ENCODE measurements at regions of chr7 and their contacts with region 1.

Region 1: DNA sequence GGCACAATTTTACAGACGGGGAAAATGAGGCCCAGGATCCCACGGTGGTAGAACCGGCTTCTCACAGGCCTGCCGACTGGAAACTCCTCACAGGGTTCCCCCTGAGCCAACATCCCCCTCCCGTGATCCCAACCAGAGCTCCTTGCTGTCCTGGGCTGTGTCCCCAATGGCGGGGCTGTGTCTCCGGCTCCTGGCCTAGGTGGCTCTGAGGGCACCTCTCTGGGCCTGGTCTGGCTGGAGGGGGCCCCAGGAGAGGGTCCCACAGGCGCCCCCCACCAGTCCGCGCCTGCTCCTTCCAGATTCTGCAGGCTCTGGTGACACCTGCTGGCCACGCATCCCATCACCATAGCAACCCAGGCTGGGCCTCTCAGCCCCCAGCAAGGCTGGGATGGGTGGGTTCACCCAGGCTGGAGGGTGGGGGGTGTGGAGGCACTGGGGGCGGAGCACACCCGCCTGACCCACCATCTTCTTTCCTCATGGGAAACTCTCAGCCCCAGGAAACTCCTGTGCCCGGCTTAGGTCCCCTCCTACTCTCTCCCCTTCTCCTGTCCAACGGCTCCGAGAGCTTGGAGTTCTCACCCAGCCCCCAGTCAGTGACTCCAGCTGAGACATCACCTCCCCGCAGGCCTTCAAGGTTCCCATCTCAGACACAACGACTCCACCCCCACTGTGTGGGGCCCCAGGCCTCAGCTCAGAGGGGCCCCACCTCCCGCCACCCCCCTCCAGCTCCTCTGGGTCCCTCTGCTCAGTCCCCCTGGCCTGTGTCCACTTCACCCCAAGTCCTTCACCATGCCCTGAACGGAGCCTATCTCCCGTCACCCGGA is 27.1 kb upstream of the TNRC18 start:
- DNase-seq: peak; percentile 56 to 65
- H3K4me3 ChIP-seq: no peak overlapping the region
- H3K27ac ChIP-seq: no peak overlapping the region
- H3K4me1 ChIP-seq: no peaks in the 10 kb centered on the region
- H3K27me3 ChIP-seq: no peaks in the 10 kb centered on the region
- CTCF ChIP-seq: peak; percentile 72 to 84 (median 80)
- POLR2A ChIP-seq: no peak

Region 2: GRCh38 chr7:5077740-5078139 is 373.0 kb before region 1 on chr7:
- intact Hi-C with region 1: no loop called
- DNase-seq: no peak
- H3K4me3 ChIP-seq: no peak overlapping the region
- H3K27ac ChIP-seq: no peak overlapping the region
- H3K4me1 ChIP-seq: no peaks in the 10 kb centered on the region
- H3K27me3 ChIP-seq: no peaks in the 10 kb centered on the region
- CTCF ChIP-seq: no peak
- POLR2A ChIP-seq: no peak

Region 3: GRCh38 chr7:5243261-5243660 is 207.5 kb before region 1 on chr7:
- intact Hi-C with region 1: loop called (anchors 5 kb)
- DNase-seq: no peak
- H3K4me3 ChIP-seq: no peak overlapping the region
- H3K27ac ChIP-seq: no peak overlapping the region
- H3K4me1 ChIP-seq: no peaks in the 10 kb centered on the region
- H3K27me3 ChIP-seq: no peaks in the 10 kb centered on the region
- CTCF ChIP-seq: no peak
- POLR2A ChIP-seq: no peak

Region 4: DNA sequence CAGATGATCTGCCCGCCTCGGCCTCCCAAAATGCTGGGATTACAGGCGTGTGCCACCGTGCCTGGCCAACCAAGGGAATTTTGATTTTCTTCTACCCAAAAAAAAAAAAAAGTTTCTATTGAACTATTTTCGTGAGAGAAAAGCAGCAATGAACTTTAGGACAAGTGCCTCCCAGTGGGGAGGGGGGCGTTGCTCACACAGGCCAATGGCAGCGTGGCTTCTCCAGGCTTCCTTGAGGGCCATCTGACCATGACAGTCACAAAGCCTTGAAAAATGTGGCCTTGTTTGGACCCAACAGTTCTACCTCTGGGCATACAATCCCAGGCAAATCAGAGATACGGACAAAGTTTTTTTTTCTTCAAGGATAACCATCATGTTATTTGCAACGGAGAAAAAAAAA is 83.1 kb before region 1 on chr7:
- intact Hi-C with region 1: loop called (anchors 2 kb)
- DNase-seq: no peak
- H3K4me3 ChIP-seq: no peak overlapping the region
- H3K27ac ChIP-seq: peak overlapping the region in 1 of 2 donors; percentile 33
- H3K4me1 ChIP-seq: peaks cover 6 to 8% of the 10 kb centered on the region in 2 donors
- H3K27me3 ChIP-seq: no peaks in the 10 kb centered on the region
- CTCF ChIP-seq: no peak
- POLR2A ChIP-seq: no peak

Measured in uterus (tissue), 4 donors.